ENCODE measurements at regions of chrX and their contacts with region 1.

Region 1: DNA sequence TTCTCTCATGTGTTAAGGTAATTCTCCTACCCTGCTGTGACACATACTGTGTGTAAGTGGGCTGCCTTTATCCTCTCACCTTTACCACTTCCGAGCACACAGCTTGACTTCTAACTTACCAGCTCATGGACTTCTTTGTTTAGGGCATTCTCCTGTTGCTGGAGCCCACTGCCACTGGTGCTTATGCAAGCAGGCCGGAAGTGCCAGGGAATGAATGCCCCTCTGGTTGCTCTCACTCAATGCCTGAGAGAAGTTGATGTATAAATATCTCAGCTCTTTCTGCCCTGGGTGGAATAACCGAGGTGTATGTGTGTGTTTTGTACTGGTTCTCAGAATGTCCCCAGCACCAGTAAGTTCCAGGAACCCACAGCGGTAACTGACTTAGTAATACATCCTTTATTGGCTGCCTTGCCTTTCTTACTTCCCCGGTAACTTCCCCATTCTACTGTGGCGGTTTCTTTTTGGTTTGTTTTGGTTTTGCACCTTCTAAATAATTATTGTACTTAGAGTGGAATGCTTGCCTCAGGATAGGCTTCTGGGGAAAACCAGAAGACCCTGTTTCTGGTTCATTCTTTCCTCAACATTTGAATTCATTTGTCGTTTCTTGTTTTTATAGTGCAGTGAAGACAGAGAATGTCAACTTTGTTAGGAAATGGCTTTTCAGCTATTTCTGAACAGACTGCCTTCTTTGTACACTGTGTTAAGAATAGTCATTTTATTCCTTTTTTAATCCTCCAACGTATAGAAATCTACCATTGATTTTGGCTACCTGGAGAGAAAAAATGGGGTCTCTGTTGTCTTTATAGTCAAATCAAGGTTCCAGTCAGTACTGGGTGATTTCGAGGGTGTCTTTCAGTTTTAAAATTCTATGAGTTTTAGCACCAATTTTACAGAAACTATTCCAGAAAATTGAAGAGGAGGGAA is 45.4 kb downstream of the CXorf58 start:
- DNase-seq: peak; percentile 54
- H3K4me3 Mint-ChIP-seq: peak overlapping the region; percentile 73
- H3K27ac Mint-ChIP-seq: peak overlapping the region; percentile 92
- H3K4me1 Mint-ChIP-seq: peaks cover 6% of the 10 kb centered on the region
- H3K27me3 Mint-ChIP-seq: no peaks in the 10 kb centered on the region

Region 2: GRCh38 chrX:23907498-23908218 is 45.6 kb before region 1 on chrX and contains the starts of genes APOO and CXorf58:
- CTCF ChIA-PET with region 1: interaction called, 3 read pairs
- POLR2A ChIA-PET with region 1: no interaction called
- intact Hi-C with region 1: loop called (anchors 1 kb)
- DNase-seq: peak; percentile 94
- H3K4me3 Mint-ChIP-seq: peak within 1 kb of the TSS; percentile 74
- H3K27ac Mint-ChIP-seq: peak within 1 kb of the TSS; percentile 87
- H3K4me1 Mint-ChIP-seq: peaks cover 21% of the 10 kb centered on the region
- H3K27me3 Mint-ChIP-seq: no peaks in the 10 kb centered on the region
- total RNA-seq, gene APOO: 32.8 to 35.0 TPM
- total RNA-seq, gene CXorf58: 0.17 TPM in 1 of 2 experiments, not detected in the other

Region 3: DNA sequence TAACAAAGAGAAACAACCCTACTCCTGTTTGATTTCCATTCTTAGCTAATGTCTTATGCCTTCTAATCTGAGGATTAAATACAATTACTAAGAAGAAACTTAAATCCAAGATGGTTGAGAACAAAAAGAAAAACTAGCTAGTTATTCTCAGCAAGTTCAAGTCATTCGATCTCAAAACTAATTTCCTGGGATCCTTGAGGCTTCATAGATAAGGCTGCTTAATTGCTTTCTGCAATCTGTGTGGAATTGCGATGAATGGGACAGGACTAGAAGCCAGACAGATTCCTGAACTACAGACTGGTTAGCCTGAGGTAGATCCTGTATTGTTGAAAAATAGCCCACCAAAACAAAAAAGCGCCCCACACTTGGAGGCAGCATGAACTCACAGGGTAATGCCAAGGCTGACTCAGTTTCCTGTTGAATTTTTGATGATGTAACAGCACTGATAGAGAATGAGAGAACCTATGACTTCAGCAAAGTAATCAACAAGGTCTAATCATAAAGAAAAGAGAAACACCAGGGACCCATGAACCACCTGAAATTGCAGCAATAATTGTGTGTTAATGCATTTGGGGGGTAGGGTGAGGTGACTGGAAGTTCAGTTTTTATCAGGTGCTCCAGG is 39.9 kb after region 1 on chrX:
- CTCF ChIA-PET with region 1: no interaction called
- POLR2A ChIA-PET with region 1: no interaction called
- intact Hi-C with region 1: loop called (anchors 2 kb)
- DNase-seq: no peak
- H3K4me3 Mint-ChIP-seq: no peak overlapping the region
- H3K27ac Mint-ChIP-seq: peak overlapping the region; percentile 62
- H3K4me1 Mint-ChIP-seq: peaks cover 15% of the 10 kb centered on the region
- H3K27me3 Mint-ChIP-seq: no peaks in the 10 kb centered on the region

Region 4: GRCh38 chrX:24259544-24260240 is 306.4 kb after region 1 on chrX:
- CTCF ChIA-PET with region 1: no interaction called
- POLR2A ChIA-PET with region 1: no interaction called
- intact Hi-C with region 1: no loop called
- DNase-seq: peak; percentile 12
- H3K4me3 Mint-ChIP-seq: no peak overlapping the region
- H3K27ac Mint-ChIP-seq: no peak overlapping the region
- H3K4me1 Mint-ChIP-seq: peaks cover 12% of the 10 kb centered on the region
- H3K27me3 Mint-ChIP-seq: no peaks in the 10 kb centered on the region

Region 5: GRCh38 chrX:24536551-24536950 is 583.3 kb after region 1 on chrX:
- CTCF ChIA-PET with region 1: no interaction called
- POLR2A ChIA-PET with region 1: no interaction called
- intact Hi-C with region 1: no loop called
- DNase-seq: no peak
- H3K4me3 Mint-ChIP-seq: no peak overlapping the region
- H3K27ac Mint-ChIP-seq: no peak overlapping the region
- H3K4me1 Mint-ChIP-seq: no peaks in the 10 kb centered on the region
- H3K27me3 Mint-ChIP-seq: no peaks in the 10 kb centered on the region